ENCODE measurements at regions of chr16 and their contacts with region 1.

Region 1: GRCh38 chr16:8958344-8959167 is 5.2 kb downstream of the USP7 start:
- DNase-seq: peak; percentile 54
- H3K4me3 ChIP-seq: no peak overlapping the region
- H3K27ac ChIP-seq: peak overlapping the region; percentile 70
- H3K4me1 ChIP-seq: peaks cover 46% of the 10 kb centered on the region
- H3K27me3 ChIP-seq: no peaks in the 10 kb centered on the region
- CTCF ChIP-seq: no peak
- POLR2A ChIP-seq: no peak

Region 2: DNA sequence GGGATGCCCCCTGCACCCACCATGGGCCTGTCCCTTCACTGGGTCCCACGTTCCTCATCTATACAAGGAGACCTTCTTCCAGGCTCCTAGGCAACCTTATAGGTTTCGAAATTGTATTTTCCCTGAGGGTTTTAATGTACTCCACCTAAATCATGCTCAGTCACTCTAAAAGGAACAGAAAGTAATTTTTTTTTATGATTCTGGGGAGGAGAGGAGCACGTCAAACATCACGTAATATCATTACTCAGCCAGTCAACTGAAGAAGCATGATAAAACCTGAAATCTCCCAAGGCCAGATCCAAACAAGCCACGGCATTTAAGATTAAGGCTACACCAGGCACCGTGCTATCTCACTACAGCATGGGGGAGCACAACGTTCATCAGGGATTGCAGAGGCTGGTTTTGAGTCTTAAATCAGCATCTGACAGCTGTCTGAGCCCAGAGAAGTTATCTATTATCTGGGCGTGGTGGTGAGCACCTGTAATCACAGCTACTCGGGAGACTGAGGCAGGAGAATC is 364.3 kb before region 1 on chr16:
- CTCF ChIA-PET with region 1: no interaction called
- POLR2A ChIA-PET with region 1: no interaction called
- dilution Hi-C with region 1: no loop called
- intact Hi-C with region 1: no loop called
- DNase-seq: no peak
- H3K4me3 ChIP-seq: no peak overlapping the region
- H3K27ac ChIP-seq: no peak overlapping the region
- H3K4me1 ChIP-seq: no peaks in the 10 kb centered on the region
- H3K27me3 ChIP-seq: peaks cover 7 to 13% of the 10 kb centered on the region in 2 experiments
- CTCF ChIP-seq: no peak
- POLR2A ChIP-seq: no peak

Region 3: DNA sequence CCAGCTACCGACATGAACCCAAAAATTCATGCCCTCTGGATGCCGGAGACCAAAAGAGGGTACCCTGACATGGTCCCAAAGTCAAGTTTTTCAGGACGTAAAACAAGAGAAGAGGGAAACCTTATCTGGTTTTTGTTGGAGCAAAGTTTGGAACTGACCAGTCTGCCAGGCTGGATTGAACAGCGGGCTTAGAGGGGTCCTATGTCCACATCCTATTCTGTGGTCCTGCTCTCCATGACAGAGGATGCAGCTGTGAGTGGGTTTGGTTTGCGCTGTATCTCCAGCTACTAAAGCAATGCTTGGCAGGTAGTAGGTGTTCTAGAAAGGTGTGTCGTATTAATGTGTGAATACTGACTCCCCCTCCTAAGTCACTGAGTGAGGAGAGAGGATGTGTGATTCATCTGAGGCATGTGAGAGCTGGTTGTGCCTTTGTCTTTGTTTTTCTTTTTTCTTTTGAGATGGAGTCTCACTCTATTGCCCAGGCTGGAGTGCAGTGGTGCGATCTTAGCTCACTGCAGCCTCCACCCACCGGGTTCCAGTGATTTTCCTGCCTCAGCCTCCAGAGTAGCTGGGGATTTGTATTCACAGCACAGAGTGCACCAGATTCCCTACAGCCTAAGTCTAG is 129.9 kb before region 1 on chr16:
- CTCF ChIA-PET with region 1: no interaction called
- POLR2A ChIA-PET with region 1: no interaction called
- dilution Hi-C with region 1: no loop called
- intact Hi-C with region 1: no loop called
- DNase-seq: peak; percentile 69
- H3K4me3 ChIP-seq: no peak overlapping the region
- H3K27ac ChIP-seq: peak overlapping the region; percentile 36
- H3K4me1 ChIP-seq: peaks cover 18% of the 10 kb centered on the region
- H3K27me3 ChIP-seq: no peaks in the 10 kb centered on the region
- CTCF ChIP-seq: no peak
- POLR2A ChIP-seq: no peak

Region 4: DNA sequence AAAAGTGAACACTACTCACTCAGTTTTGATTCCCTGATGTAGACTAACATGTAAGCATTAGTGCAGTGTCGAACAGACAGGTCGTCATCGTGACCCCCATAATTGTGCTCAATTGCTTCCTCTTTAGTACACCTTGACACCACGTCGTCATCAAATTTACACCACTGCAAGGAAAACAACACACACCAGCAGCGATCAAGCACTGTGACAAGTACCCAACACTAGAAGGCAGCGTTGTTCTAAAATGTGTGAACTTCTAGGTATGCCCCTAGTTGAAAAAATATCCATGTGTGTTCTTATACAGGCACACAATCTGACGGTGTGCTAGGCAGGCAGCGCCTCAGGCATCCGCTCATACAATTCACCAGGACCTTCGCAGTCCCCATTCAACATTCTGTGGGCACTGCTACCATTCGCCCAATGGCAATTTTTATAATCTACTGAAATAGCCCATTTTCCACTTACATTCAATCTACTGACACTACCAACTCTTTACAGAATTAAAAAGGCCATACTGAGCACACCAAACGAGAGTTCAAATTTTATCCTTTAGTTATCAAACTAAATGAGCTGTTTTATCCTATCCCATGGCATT is 53.3 kb before region 1 on chr16:
- CTCF ChIA-PET with region 1: no interaction called
- POLR2A ChIA-PET with region 1: no interaction called
- dilution Hi-C with region 1: no loop called
- intact Hi-C with region 1: no loop called
- DNase-seq: peak; percentile 42
- H3K4me3 ChIP-seq: no peak overlapping the region
- H3K27ac ChIP-seq: no peak overlapping the region
- H3K4me1 ChIP-seq: no peaks in the 10 kb centered on the region
- H3K27me3 ChIP-seq: no peaks in the 10 kb centered on the region
- CTCF ChIP-seq: peak; percentile 27 to 50
- POLR2A ChIP-seq: no peak

Region 5: GRCh38 chr16:8919934-8920462 is 38.6 kb before region 1 on chr16:
- CTCF ChIA-PET with region 1: no interaction called
- POLR2A ChIA-PET with region 1: no interaction called
- dilution Hi-C with region 1: no loop called
- intact Hi-C with region 1: no loop called
- DNase-seq: no peak
- H3K4me3 ChIP-seq: no peak overlapping the region
- H3K27ac ChIP-seq: no peak overlapping the region
- H3K4me1 ChIP-seq: no peaks in the 10 kb centered on the region
- H3K27me3 ChIP-seq: no peaks in the 10 kb centered on the region
- CTCF ChIP-seq: no peak
- POLR2A ChIP-seq: no peak

Region 6: GRCh38 chr16:9107025-9107970 is 148.7 kb after region 1 on chr16:
- CTCF ChIA-PET with region 1: no interaction called
- POLR2A ChIA-PET with region 1: interaction called, 3 read pairs
- dilution Hi-C with region 1: no loop called
- intact Hi-C with region 1: loop called (anchors 5 kb)
- DNase-seq: no peak
- H3K4me3 ChIP-seq: no peak overlapping the region
- H3K27ac ChIP-seq: no peak overlapping the region
- H3K4me1 ChIP-seq: peaks cover 39% of the 10 kb centered on the region
- H3K27me3 ChIP-seq: no peaks in the 10 kb centered on the region
- CTCF ChIP-seq: no peak
- POLR2A ChIP-seq: no peak

Measured in endothelial cell of umbilical vein (primary cell).